Mammary epithelial cell (primary cell): ENCODE measurements at regions of chr17 and their contacts with region 1.

Region 1: DNA sequence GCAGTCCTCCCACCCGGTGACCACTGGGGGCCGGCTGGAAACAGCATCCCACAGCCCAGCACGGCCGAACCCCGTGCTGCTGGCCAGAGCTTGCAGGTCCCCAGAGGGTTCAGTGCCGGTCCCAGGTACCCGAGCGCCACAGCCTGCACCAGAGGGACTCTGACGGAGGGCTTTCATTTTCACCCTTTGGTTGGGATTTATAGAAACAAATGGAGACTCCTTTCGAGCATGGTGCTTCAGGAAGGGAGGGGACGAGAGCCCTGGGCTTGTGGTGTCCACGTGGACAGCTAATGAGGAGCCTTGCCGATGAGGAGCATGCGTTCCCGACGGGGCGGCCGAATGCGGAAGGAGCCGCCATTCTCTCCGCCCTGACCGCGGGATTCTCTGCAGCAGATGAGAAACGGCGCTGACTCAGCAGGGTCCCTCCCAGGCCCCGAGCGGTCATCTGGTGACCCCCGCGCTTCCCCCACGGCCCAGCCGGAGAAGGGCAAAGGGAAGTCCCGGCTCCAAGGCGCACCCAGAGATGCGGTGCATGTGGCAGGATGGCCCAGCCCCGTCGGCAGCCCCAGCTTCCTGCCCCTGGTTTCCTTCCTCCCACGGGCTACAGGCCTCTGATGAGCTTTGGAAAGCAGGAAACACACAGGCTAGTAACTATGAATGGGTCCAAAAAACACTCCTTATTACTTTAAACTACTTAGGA is 9.8 kb downstream of the SLC38A10 start:
- DNase-seq: no peak
- H3K4me3 ChIP-seq: no peak overlapping the region
- H3K27ac ChIP-seq: no peak overlapping the region
- H3K4me1 ChIP-seq: no peaks in the 10 kb centered on the region
- H3K27me3 ChIP-seq: no peaks in the 10 kb centered on the region
- CTCF ChIP-seq: no peak

Region 2: GRCh38 chr17:81456798-81457197 is 171.5 kb after region 1 on chr17:
- CTCF ChIA-PET with region 1: no interaction called
- dilution Hi-C with region 1: loop called (anchors 5 kb)
- in situ Hi-C with region 1: no loop called
- intact Hi-C with region 1: no loop called
- DNase-seq: no peak
- H3K4me3 ChIP-seq: no peak overlapping the region
- H3K27ac ChIP-seq: no peak overlapping the region
- H3K4me1 ChIP-seq: no peaks in the 10 kb centered on the region
- H3K27me3 ChIP-seq: no peaks in the 10 kb centered on the region
- CTCF ChIP-seq: no peak